Right ventricle myocardium inferior (tissue), 1 donor: ENCODE measurements at regions of chr9 and their contacts with region 1.

Region 1: GRCh38 chr9:99819856-99820684 is 1.6 kb upstream of the NR4A3 start:
- DNase-seq: peak; percentile 96
- ATAC-seq: peak; percentile 79

Region 2: DNA sequence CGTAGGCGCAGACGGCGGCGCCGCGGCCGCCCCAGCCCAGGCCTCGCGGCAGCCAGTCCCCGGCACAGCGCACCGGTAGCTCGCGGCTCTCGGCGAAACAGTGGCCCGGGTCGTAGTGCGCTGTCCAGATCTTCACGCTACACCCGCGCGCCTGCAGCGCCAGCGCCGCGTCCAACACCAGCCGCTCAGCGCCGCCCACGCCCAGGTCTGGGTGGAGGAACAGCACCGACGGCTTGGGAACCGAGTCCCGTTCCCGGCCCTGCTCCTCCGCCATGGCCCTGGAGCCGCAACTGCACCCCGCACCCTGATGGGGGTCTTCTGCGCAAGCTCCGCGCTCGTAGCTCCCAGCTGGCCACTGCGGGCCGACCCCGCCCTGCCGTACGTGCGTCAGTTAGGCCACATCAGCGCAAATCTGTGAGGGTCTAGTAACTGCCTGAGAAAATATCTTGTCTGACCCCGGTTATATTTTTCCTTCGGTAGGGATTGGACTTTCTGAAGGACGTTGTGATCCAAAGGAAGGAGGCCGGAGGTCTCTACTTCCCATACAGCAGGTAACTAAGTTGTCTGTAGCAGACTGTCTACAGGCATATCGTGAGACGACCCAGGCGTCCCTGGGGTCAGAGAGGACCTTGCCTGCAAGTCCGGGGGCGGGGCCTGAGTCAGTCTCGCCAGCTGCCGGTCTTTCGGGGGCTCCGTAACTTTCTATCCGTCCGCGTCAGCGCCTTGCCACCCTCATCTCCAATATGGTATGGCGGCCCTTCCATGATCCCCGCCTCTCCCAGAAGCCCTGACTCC is 598.3 kb before region 1 on chr9 and contains the starts of genes ALG2 and SEC61B:
- intact Hi-C with region 1: loop called (anchors 2 kb)
- DNase-seq: peak; percentile 97
- ATAC-seq: peak; percentile 99
- total RNA-seq, gene ALG2: 13.7 TPM
- total RNA-seq, gene SEC61B: 49.6 TPM

Region 3: DNA sequence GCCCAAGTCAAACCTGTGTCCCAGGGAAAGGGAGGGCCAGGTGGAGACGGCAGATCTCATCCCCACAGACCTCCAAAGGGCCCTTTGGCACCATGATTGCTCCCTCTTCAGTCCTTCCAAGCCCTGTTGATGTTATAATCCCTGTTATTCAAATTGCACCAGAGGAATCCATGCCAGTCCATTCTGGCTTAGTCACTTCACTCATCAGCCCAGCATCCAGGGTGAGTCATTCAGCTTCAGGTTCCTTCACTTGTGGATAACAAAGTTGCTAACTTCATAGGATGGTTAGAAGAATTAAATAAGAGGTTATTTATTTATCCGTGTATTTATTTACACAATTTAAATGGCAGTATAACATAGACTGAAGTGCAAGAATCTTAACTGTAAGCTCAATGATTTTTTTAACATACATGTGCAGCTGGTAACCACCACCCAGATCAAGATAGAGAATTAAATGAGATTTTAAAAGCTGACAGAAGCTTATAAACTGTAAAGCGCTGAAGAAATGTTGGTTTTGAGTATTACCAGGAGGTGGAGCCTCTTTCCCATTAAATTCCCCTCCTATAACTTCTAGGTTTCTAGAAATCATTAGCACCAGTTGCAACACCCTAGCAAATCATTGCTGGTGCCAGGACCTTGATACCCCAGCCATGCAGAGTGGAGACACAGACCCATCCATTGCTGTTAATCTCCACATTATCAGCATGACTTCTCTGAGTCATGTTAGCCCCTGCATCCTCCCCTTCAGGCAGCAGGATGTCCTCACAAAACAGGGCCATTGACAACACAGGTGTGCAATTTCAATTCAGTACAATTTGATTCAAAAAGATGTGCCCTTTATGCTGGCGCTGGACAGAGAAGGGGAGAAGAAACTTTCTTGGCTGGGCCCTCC is 520.6 kb before region 1 on chr9:
- intact Hi-C with region 1: loop called (anchors 10 kb)
- DNase-seq: no peak
- ATAC-seq: no peak

Region 4: DNA sequence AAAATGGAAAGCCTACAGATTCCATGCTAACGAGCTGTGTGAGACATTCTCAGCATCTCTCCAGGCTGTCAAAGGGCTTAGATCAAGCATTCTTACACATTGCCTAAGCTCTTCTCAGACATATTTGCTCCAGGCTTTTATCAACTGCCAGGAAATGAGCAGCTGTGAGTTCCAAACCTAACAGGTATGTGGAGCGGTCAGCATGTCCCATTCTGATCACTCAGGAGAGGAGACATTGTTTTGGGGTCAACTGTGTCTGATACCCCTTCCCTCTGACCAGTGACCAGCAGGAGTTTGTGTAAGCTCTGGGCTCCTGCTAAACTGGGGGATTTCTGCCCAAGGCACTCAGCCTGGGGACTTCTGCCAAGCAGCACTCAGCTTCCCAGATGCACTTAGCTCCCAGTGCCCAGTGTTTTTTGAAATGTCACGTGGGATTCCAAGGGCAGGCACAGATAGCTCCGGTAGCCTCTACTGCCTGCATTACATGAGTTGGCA is 368.9 kb before region 1 on chr9:
- intact Hi-C with region 1: loop called (anchors 1 kb)
- DNase-seq: no peak
- ATAC-seq: peak; percentile 95

Region 5: GRCh38 chr9:99906403-99907207 is 86.5 kb after region 1 on chr9 and contains the start of gene STX17:
- intact Hi-C with region 1: loop called (anchors 5 kb)
- DNase-seq: peak; percentile 87
- ATAC-seq: peak; percentile 96
- total RNA-seq, gene STX17: 25.0 TPM

Region 6: DNA sequence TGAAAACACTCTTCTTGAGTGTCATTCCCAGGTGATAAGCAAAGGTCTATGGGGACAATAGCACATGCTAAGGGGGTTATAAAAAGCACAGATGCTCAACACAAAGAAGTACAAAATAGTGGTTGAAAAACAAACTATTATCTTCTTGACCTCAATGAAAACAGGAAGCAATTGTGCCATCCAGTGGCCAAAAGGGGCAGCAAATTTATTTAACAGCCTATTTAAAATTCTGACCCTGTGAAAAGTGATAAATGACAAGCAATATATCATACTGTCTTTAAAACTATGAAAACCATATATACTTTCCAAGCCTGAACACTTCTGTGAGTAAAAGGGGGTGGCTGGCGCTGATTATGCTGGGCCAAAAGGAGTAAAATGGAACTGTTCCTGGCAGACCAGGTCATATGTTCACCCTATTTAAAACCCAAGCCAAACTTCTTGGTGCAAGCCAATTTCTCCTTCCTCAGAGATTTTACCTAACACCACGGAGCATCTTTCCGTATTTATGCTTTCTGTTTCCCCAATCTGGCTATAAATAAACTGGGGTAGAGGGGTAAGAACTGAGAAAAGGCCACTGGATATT is 503.0 kb after region 1 on chr9:
- intact Hi-C with region 1: loop called (anchors 10 kb)
- DNase-seq: no peak
- ATAC-seq: no peak